Aorta (tissue), 5 donors: ENCODE measurements at regions of chr14 and their contacts with region 1.

Region 1: GRCh38 chr14:91901449-91902226 is 34.3 kb upstream of the TC2N start:
- DNase-seq: no peak
- ATAC-seq: peak; percentile 13
- H3K4me3 ChIP-seq: no peak overlapping the region
- H3K27ac ChIP-seq: peak overlapping the region; percentile 90 to 97
- H3K4me1 ChIP-seq: peaks cover 11 to 19% of the 10 kb centered on the region in 2 donors
- H3K27me3 ChIP-seq: no peaks in the 10 kb centered on the region

Region 2: DNA sequence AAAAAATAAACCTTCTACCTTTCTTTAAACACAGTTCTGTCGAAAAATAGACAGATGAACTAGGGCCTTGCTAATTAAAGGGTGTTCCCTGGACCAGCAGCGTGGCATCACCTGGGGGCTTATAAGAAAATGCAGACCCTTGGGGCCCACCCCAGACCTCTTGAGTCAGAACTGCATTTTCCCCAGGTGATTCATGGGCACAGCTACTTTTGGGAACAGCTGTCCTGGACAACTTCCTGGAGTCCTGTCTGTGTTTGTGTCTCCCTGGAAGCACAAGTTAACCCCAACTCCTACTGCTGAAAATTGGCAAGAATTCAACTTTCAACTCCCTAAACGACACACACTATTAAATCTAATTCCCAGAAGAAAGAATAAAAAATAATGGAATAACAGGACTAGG is 28.1 kb after region 1 on chr14:
- intact Hi-C with region 1: loop called (anchors 2 to 5 kb)
- DNase-seq: peak in 1 of 2 donors; percentile 64
- ATAC-seq: no peak
- H3K4me3 ChIP-seq: no peak overlapping the region
- H3K27ac ChIP-seq: no peak overlapping the region
- H3K4me1 ChIP-seq: peaks cover 7 to 18% of the 10 kb centered on the region in 2 donors
- H3K27me3 ChIP-seq: no peaks in the 10 kb centered on the region

Region 3: GRCh38 chr14:91980127-91980741 is 78.6 kb after region 1 on chr14:
- intact Hi-C with region 1: loop called in 1 of 2 experiments (anchors 5 kb)
- DNase-seq: no peak
- ATAC-seq: peak; percentile 64
- H3K4me3 ChIP-seq: no peak overlapping the region
- H3K27ac ChIP-seq: no peak overlapping the region
- H3K4me1 ChIP-seq: peaks cover 0 to 12% of the 10 kb centered on the region in 2 donors
- H3K27me3 ChIP-seq: no peaks in the 10 kb centered on the region

Region 4: GRCh38 chr14:92014040-92014439 is 112.4 kb after region 1 on chr14:
- intact Hi-C with region 1: no loop called
- DNase-seq: no peak
- ATAC-seq: no peak
- H3K4me3 ChIP-seq: no peak overlapping the region
- H3K27ac ChIP-seq: no peak overlapping the region
- H3K4me1 ChIP-seq: no peaks in the 10 kb centered on the region
- H3K27me3 ChIP-seq: no peaks in the 10 kb centered on the region